K562 (cell line): ENCODE measurements at regions of chr15 and their contacts with region 1.

Region 1: DNA sequence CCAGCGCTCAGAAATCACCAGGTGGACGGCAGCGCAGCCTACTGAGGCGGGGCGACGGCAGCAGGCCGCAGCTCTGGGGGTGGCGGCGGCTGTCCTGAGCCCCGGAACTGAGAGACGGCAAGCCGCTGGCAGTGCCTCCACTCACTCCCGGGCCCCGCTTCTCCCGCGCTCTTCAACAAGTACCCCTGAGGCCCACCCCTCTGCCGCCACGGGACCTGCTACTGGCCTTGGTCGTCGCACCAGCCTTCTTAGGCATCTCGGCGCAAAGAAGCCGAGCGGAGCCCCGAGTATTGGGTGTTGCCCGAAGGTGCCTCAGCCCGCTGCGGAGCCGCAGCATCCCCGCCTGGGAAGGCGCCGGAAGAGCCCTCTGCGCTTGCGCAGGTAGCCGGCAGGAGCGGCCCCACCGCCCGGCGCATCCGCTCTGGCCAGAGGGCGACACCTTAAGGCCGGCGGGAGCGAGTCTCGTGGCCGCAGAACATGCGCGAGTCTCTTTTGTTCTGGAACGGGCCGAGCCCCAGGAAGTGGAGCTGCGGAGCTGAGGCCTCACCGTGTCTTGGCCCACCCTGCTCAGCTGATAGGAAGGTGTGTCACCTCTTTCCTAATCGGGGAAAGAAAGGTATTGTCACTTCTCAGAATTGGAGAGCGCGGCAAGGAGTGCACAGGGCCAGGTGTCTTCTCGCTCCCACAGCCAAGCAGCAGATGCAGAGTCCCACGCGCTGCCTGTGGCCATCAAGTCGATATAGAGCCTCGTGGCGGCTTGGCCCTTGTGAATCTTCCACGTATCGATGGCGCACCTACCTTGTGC is at the start of gene C15orf40:
- DNase-seq: peak; percentile 94 to 95 (median 95)
- ATAC-seq: peak; percentile 94
- H3K4me3 ChIP-seq: peak within 1 kb of the TSS; percentile 68
- H3K27ac ChIP-seq: peak within 1 kb of the TSS; percentile 87
- H3K4me1 ChIP-seq: peaks cover 20 to 24% of the 10 kb centered on the region in 2 experiments; a peak in 4 of 5 replicates
- H3K27me3 ChIP-seq: no peaks in the 10 kb centered on the region; a peak in 1 of 5 replicates
- CTCF ChIP-seq: peak; percentile 75 to 85 (median 84)
- EP300 ChIP-seq: 0 out of 2 replicates have a peak, but pooled peaks have one; percentile 18
- POLR2A ChIP-seq: peak; percentile 87
- RAD21 ChIP-seq: peak; percentile 22 to 33; a peak in 3 of 4 replicates
- polyA plus RNA-seq, gene C15orf40: 49.9 to 52.0 TPM

Region 2: DNA sequence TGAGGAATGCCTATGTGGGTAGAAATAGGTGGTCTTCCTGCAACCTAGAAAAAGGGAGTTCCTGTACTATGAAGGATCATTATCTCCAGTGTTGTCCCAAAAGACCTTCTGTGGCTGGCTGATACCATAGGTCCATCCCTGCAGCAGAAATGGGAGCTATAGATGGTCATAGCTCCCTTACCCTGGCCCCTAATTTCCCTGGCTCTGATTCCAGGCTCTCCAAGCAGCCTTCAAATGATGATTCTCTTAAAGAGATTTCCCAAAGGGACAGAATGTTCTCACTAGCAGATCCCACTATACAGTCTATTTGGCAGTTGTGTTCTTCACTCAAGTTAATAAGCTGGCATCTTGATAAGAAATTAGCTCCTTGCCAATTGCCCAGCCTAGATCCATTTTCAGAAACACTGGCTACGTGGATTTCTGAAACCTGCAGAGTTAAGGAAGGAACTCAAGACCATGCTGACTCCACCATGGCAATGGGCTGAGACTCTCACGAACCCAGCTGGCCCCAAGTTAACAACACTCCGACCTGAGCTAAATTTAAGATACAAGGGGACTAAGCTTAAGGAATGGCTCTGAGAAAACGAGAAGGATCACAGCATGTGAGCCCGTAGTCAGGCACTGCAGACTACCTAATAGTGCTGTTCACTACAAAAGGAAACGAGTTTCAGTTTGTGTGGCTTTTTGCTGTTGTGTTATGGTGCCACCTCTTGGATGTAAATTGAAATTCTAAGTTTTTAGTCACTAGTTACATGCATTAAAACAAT is 11.4 kb before region 1 on chr15:
- CTCF ChIA-PET with region 1: no interaction called
- POLR2A ChIA-PET with region 1: interaction called, 16 read pairs
- in situ Hi-C with region 1: no loop called
- intact Hi-C with region 1: no loop called
- DNase-seq: peak; percentile 27 to 67 (median 42)
- ATAC-seq: peak; percentile 92
- H3K4me3 ChIP-seq: no peak overlapping the region
- H3K27ac ChIP-seq: peak overlapping the region; percentile 2; the same call in 1 of the 3 replicates
- H3K4me1 ChIP-seq: peaks cover 0 to 5% of the 10 kb centered on the region in 2 experiments; a peak in 2 of 5 replicates
- H3K27me3 ChIP-seq: no peaks in the 10 kb centered on the region
- CTCF ChIP-seq: peak; percentile 56 to 83 (median 65)
- EP300 ChIP-seq: no peak
- POLR2A ChIP-seq: no peak
- RAD21 ChIP-seq: peak; percentile 91 to 96

Region 3: GRCh38 chr15:83066734-83067637 is 55.5 kb after region 1 on chr15 and contains the start of gene BTBD1:
- CTCF ChIA-PET with region 1: no interaction called
- POLR2A ChIA-PET with region 1: interaction called, 3 read pairs
- in situ Hi-C with region 1: no loop called
- intact Hi-C with region 1: loop called (anchors 2 kb)
- DNase-seq: peak; percentile 94 to 97 (median 96)
- ATAC-seq: peak; percentile 95
- H3K4me3 ChIP-seq: peak within 1 kb of the TSS; percentile 90
- H3K27ac ChIP-seq: peak within 1 kb of the TSS; percentile 92
- H3K4me1 ChIP-seq: peaks cover 9 to 29% of the 10 kb centered on the region in 2 experiments
- H3K27me3 ChIP-seq: no peaks in the 10 kb centered on the region
- CTCF ChIP-seq: peak in 2 of 3 experiments; percentile 10 to 33; a peak in 3 of 6 replicates
- EP300 ChIP-seq: no peak
- POLR2A ChIP-seq: peak; percentile 94
- RAD21 ChIP-seq: no peak; a peak in 2 of 4 replicates
- polyA plus RNA-seq, gene BTBD1: 19.4 to 27.2 TPM

Region 4: GRCh38 chr15:83108266-83109226 is 97.1 kb after region 1 on chr15:
- CTCF ChIA-PET with region 1: no interaction called
- POLR2A ChIA-PET with region 1: no interaction called
- in situ Hi-C with region 1: no loop called
- intact Hi-C with region 1: loop called (anchors 5 kb)
- DNase-seq: peak in 1 of 4 experiments; percentile 46
- ATAC-seq: peak; percentile 81
- H3K4me3 ChIP-seq: peak overlapping the region; percentile 51
- H3K27ac ChIP-seq: no peak overlapping the region; the same call in 2 of the 3 replicates
- H3K4me1 ChIP-seq: peaks cover 18 to 24% of the 10 kb centered on the region in 2 experiments; a peak in 4 of 5 replicates
- H3K27me3 ChIP-seq: no peaks in the 10 kb centered on the region; a peak in 1 of 5 replicates
- CTCF ChIP-seq: no peak
- EP300 ChIP-seq: peak; percentile 53; the same call in 1 of the 2 replicates
- POLR2A ChIP-seq: no peak
- RAD21 ChIP-seq: peak; percentile 22 to 23; a peak in 1 of 4 replicates

Region 5: DNA sequence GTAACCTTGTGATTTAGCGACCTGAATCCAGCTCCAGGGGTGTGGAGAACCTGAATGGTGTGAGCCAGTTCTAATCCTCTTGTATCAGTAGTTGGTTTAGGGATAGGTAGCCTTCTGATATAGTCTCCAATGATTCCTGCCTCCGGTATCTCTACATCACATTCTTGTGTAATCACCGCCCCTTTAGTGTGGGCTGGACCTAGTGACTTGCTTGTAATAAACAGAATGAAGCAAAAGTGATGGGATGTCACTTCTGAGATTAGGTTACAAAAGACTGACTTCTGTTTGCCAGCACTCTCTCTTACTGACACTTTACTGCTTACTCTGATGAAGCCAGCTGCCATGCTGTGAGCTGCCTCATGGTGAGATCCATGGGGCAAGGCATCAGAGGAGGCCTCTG is 132.7 kb after region 1 on chr15:
- CTCF ChIA-PET with region 1: no interaction called
- POLR2A ChIA-PET with region 1: no interaction called
- in situ Hi-C with region 1: no loop called
- intact Hi-C with region 1: no loop called
- DNase-seq: no peak
- ATAC-seq: no peak; the same call in 1 of the 3 replicates
- H3K4me3 ChIP-seq: no peak overlapping the region
- H3K27ac ChIP-seq: no peak overlapping the region
- H3K4me1 ChIP-seq: no peaks in the 10 kb centered on the region; a peak in 1 of 5 replicates
- H3K27me3 ChIP-seq: no peaks in the 10 kb centered on the region
- CTCF ChIP-seq: no peak
- EP300 ChIP-seq: no peak
- POLR2A ChIP-seq: no peak
- RAD21 ChIP-seq: no peak

Region 6: GRCh38 chr15:83207622-83208411 is 196.3 kb after region 1 on chr15 and contains the start of gene HDGFL3:
- CTCF ChIA-PET with region 1: no interaction called
- POLR2A ChIA-PET with region 1: no interaction called
- in situ Hi-C with region 1: no loop called
- intact Hi-C with region 1: loop called (anchors 2 kb)
- DNase-seq: peak in 3 of 4 experiments; percentile 60 to 62 (median 62)
- ATAC-seq: peak; percentile 65
- H3K4me3 ChIP-seq: peak within 1 kb of the TSS; percentile 69
- H3K27ac ChIP-seq: peak within 1 kb of the TSS; percentile 68
- H3K4me1 ChIP-seq: peaks cover 14 to 18% of the 10 kb centered on the region in 2 experiments
- H3K27me3 ChIP-seq: peaks cover 2 to 6% of the 10 kb centered on the region in 2 experiments; a peak in 3 of 5 replicates
- CTCF ChIP-seq: peak in 2 of 3 experiments; percentile 40 to 41; a peak in 3 of 6 replicates
- EP300 ChIP-seq: no peak
- POLR2A ChIP-seq: 0 out of 2 replicates have a peak, but pooled peaks have one; percentile 31
- RAD21 ChIP-seq: peak; percentile 51 to 60
- polyA plus RNA-seq, gene HDGFL3: 6.7 to 7.5 TPM

Region 7: GRCh38 chr15:83380682-83381081 is 369.2 kb after region 1 on chr15:
- CTCF ChIA-PET with region 1: interaction called, 5 read pairs
- POLR2A ChIA-PET with region 1: no interaction called
- in situ Hi-C with region 1: no loop called
- intact Hi-C with region 1: loop called (anchors 1 kb)
- DNase-seq: peak; percentile 23 to 63 (median 44)
- ATAC-seq: peak; percentile 99
- H3K4me3 ChIP-seq: no peak overlapping the region
- H3K27ac ChIP-seq: no peak overlapping the region
- H3K4me1 ChIP-seq: peaks cover 0 to 4% of the 10 kb centered on the region in 2 experiments; a peak in 2 of 5 replicates
- H3K27me3 ChIP-seq: peaks cover 9 to 22% of the 10 kb centered on the region in 2 experiments
- CTCF ChIP-seq: peak; percentile 69 to 74 (median 70)
- EP300 ChIP-seq: no peak
- POLR2A ChIP-seq: no peak
- RAD21 ChIP-seq: peak; percentile 53 to 74; a peak in 3 of 4 replicates

Region 8: GRCh38 chr15:83436458-83437158 is 425.1 kb after region 1 on chr15:
- CTCF ChIA-PET with region 1: no interaction called
- POLR2A ChIA-PET with region 1: no interaction called
- in situ Hi-C with region 1: no loop called
- intact Hi-C with region 1: loop called (anchors 2 kb)
- DNase-seq: peak; percentile 18 to 55 (median 34)
- ATAC-seq: peak; percentile 92
- H3K4me3 ChIP-seq: no peak overlapping the region
- H3K27ac ChIP-seq: no peak overlapping the region
- H3K4me1 ChIP-seq: no peaks in the 10 kb centered on the region
- H3K27me3 ChIP-seq: peaks cover 0 to 2% of the 10 kb centered on the region in 2 experiments; a peak in 2 of 5 replicates
- CTCF ChIP-seq: peak; percentile 54 to 68 (median 67)
- EP300 ChIP-seq: no peak
- POLR2A ChIP-seq: no peak
- RAD21 ChIP-seq: peak; percentile 50 to 75

Region 9: DNA sequence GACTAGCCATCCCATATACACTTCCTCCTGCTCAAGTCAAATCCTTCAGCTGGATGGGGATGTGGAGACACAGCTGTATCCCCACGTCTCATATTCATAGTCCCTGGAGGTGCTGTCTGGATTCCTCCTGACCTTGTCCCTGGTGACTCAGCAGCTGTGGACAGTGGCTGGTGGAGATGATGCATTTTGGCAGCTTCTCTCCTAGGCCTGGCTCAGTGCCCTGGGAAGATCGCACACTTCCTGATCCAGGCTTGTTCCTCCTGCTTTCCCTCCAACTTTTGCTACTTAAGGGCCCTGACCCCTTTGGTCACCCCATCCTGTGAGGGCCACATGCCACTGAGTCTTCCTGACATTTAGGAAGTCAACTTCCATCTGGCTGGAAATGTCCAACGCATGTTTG is 686.8 kb after region 1 on chr15:
- CTCF ChIA-PET with region 1: no interaction called
- POLR2A ChIA-PET with region 1: no interaction called
- in situ Hi-C with region 1: no loop called
- intact Hi-C with region 1: no loop called
- DNase-seq: no peak
- ATAC-seq: no peak
- H3K4me3 ChIP-seq: no peak overlapping the region
- H3K27ac ChIP-seq: no peak overlapping the region
- H3K4me1 ChIP-seq: no peaks in the 10 kb centered on the region
- H3K27me3 ChIP-seq: peaks cover 0 to 2% of the 10 kb centered on the region in 2 experiments; a peak in 2 of 5 replicates
- CTCF ChIP-seq: no peak
- EP300 ChIP-seq: no peak
- POLR2A ChIP-seq: no peak
- RAD21 ChIP-seq: no peak